ENCODE measurements at regions of chr1 and their contacts with region 1.

Region 1: DNA sequence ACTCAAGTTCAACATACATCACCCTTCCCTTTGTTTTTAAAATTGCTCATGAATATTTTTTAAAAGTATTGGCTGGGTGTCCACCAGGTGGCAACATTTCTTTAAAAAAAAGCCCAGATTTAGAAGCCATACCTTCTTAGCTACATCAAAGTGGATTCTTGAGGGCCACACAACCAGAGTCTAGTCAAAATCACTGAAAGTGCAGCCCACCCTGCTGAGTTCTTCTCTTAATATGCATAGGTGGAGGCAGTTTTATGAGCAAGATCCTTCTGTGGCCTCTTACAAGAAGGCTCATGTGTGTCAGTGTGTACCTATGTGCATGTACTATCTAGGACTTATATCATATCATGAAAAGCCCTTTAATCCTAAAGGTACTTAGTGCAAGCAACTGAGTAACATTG is 16.9 kb upstream of the GNG12 start:
- DNase-seq: peak in 2 of 3 donors; percentile 39 to 52
- H3K4me3 ChIP-seq: no peak overlapping the region
- H3K27ac ChIP-seq: no peak overlapping the region
- H3K4me1 ChIP-seq: no peaks in the 10 kb centered on the region
- H3K27me3 ChIP-seq: no peaks in the 10 kb centered on the region

Region 2: DNA sequence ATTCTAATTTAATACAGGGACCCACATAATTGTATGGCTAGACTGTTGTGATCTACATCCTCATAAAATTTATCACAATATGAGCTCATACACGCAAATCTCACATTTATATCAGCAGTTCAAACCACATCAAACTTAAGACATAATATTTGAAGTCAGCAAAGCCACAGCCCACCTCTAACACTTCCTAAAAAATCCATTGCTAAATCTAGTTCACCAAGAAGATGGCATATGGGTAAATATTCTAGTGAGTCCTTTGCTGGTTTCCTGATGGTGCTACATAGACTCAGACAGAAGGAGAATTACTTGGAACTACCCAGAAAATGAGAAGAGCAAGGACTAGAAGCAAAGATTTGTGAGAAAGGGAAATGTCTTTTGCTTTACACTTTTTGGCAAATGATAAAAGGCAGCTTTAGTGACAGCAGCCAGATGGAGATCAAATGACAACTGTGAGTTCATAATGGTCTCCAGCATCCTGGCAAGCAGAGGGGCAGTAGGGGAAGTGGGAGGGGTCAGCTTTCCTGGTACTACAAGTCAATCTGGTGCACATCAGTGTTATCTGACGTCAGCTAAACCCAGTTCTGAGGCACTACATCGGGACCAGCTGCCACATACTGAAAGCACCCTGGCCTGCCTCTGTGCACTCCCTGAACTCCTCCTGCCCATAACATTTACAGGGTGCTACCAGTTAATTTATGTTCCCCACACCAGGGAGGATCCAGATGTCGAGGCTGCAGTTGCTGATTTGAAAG is 175.7 kb before region 1 on chr1:
- CTCF ChIA-PET with region 1: no interaction called
- POLR2A ChIA-PET with region 1: no interaction called
- DNase-seq: peak; percentile 84 to 98 (median 94)
- H3K4me3 ChIP-seq: peak overlapping the region in 1 of 7 experiments; percentile 37
- H3K27ac ChIP-seq: peak overlapping the region in 1 of 2 experiments; percentile 52
- H3K4me1 ChIP-seq: peaks cover 17 to 27% (median 22%) of the 10 kb centered on the region in 4 experiments
- H3K27me3 ChIP-seq: no peaks in the 10 kb centered on the region

Region 3: DNA sequence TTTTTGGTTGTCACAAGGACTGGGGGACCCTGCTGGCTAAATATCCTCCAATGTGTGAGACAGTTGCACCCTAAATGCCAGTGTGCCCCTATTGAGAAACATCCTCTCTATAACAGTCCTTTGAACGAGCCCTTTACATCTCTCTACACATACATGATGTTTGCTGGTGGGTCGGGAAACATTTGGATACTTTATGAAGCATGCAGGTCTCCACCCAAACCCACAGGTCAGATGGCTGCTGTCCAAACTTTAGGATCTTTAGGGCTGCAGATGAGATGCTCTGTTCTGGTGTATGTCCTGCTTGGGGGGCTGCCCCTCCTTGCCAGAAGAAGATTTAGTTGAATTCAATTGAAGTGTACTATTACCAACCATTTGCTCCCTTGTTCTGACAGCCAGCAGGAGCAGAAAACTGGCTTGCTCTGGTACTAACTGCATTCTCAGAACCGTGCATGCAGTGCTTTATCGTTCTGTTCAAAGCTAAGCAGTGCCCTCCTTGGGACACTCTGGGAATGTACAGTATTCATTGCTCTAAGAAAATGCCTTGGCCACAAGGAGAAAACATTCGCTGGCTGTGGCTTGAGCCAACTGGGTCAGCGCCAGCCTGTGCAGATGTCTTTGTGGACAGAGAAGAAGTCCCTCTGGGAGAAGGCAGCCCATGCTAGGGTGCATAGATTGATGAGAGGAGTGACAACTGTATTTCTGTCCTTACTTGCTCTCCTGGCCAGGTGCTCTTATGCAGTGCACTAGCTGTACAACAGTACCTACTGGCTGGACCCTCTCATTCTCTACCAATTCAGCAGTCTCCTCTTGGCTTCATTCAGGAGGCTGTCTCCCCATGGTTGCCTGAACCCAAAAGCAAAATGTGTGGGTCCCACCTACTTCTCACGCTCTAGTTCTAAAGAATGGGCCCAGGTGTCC is 261.6 kb after region 1 on chr1:
- CTCF ChIA-PET with region 1: interaction called, 21 read pairs
- POLR2A ChIA-PET with region 1: no interaction called
- DNase-seq: peak; percentile 40 to 67 (median 59)
- H3K4me3 ChIP-seq: no peak overlapping the region
- H3K27ac ChIP-seq: no peak overlapping the region
- H3K4me1 ChIP-seq: peaks cover 0 to 1% (median 0%) of the 10 kb centered on the region in 4 experiments
- H3K27me3 ChIP-seq: peaks cover 0 to 6% (median 0%) of the 10 kb centered on the region in 5 experiments